Prostate gland (tissue), 2 donors: ENCODE measurements at regions of chr9 and their contacts with region 1.

Region 1: GRCh38 chr9:129460323-129461261 is 160.3 kb downstream of the C9orf50 start:
- DNase-seq: peak; percentile 93
- H3K4me3 ChIP-seq: peak overlapping the region; percentile 18 to 31
- H3K27ac ChIP-seq: peak overlapping the region; percentile 94 to 98
- H3K4me1 ChIP-seq: peaks cover 20% of the 10 kb centered on the region
- H3K27me3 ChIP-seq: no peaks in the 10 kb centered on the region
- CTCF ChIP-seq: peak in 2 of 4 experiments; percentile 29 to 46
- POLR2A ChIP-seq: peak; percentile 80

Region 2: GRCh38 chr9:129383561-129384416 is 76.8 kb before region 1 on chr9:
- intact Hi-C with region 1: no loop called
- DNase-seq: peak; percentile 88
- H3K4me3 ChIP-seq: peak overlapping the region; percentile 41 to 45
- H3K27ac ChIP-seq: peak overlapping the region; percentile 97 to 99
- H3K4me1 ChIP-seq: peaks cover 7% of the 10 kb centered on the region
- H3K27me3 ChIP-seq: no peaks in the 10 kb centered on the region
- CTCF ChIP-seq: peak in 3 of 4 experiments; percentile 26 to 51 (median 37)
- POLR2A ChIP-seq: peak; percentile 52

Region 3: GRCh38 chr9:129413537-129414376 is 46.8 kb before region 1 on chr9:
- intact Hi-C with region 1: loop called (anchors 2 kb)
- DNase-seq: peak; percentile 99
- H3K4me3 ChIP-seq: peak overlapping the region; percentile 55 to 58
- H3K27ac ChIP-seq: peak overlapping the region; percentile 99
- H3K4me1 ChIP-seq: peaks cover 13% of the 10 kb centered on the region
- H3K27me3 ChIP-seq: no peaks in the 10 kb centered on the region
- CTCF ChIP-seq: peak in 2 of 4 experiments; percentile 18 to 23
- POLR2A ChIP-seq: peak; percentile 94